ENCODE measurements at regions of chr11 and their contacts with region 1.

Region 1: GRCh38 chr11:128831174-128832120 is 35.6 kb downstream of the KCNJ1 start:
- DNase-seq: peak; percentile 66 to 88 (median 78)
- H3K4me3 ChIP-seq: peak overlapping the region in 12 of 59 donors; percentile 2 to 34 (median 26)
- H3K27ac ChIP-seq: no peak overlapping the region
- H3K27me3 ChIP-seq: peaks cover 0 to 28% (median 0%) of the 10 kb centered on the region in 45 donors
- CTCF ChIP-seq: peak; percentile 90 to 99 (median 96)

Region 2: DNA sequence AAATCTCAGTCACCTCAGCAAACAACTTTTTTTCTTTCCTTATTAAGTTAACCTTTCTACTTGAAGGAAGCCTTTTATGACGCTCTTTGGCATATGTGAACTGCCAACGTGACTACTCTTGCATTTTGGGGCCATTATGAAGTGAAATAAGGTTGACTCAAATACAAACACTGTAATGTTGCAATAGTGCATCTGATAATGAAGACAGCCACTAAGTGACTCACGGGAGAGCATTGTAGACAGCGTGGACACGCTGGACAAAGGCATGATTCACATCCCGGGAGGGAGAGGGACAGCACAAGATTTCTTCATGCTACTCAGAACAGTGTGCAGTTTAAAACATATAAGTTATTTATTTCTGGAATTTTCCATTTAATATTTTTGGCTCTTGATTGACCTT is 804.9 kb before region 1 on chr11:
- intact Hi-C with region 1: loop called in 1 of 2 experiments (anchors 2 kb)
- DNase-seq: no peak
- H3K4me3 ChIP-seq: no peak overlapping the region
- H3K27ac ChIP-seq: no peak overlapping the region
- H3K27me3 ChIP-seq: peaks cover 0 to 41% (median 0%) of the 10 kb centered on the region in 45 donors
- CTCF ChIP-seq: no peak

Region 3: DNA sequence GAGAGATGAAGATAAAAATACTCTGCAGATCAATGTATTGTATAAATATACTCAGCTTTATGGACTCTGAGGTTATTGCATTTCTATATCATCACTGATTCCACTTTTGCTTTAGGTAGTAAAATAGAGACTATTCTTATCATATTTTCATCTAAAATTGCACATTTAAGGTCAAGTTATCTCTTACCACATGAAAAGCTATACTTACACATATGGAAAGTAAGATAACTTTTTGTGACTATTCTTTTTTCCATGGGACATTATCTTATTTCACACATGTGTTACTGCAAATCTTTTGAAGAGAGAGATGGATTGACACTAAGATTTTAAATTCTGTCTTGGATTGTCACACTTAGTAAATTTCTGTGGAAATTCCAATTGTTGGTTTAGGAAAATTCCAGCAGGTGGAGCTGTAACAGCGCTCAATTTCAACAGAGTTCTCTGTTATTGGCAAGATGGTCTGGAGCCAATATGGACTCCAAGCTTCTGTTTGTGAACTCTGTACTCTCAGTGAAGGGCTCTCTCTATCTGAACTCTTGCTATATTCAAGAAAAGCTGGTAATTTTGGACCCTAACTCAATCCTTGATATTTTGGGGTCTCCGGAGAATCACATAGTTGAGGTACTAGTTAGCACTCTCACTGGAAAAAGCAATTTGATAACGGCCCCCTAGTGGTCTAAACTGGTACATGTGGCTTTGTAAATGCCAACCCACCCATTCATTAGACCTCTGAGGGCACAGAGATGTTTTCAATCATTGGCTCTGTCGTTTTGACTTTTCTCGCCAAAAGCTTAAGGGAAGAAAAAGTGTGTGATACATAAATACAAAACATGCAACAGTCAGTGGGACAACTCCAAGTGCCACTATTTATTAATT is 673.8 kb before region 1 on chr11:
- intact Hi-C with region 1: loop called in 1 of 2 experiments (anchors 5 kb)
- DNase-seq: peak in 1 of 10 donors; percentile 15
- H3K4me3 ChIP-seq: peak overlapping the region in 9 of 59 donors; percentile 4 to 31 (median 24)
- H3K27ac ChIP-seq: no peak overlapping the region
- H3K27me3 ChIP-seq: peaks cover 0 to 9% (median 0%) of the 10 kb centered on the region in 45 donors
- CTCF ChIP-seq: peak; percentile 72 to 98 (median 90)

Region 4: GRCh38 chr11:128172046-128172878 is 659.2 kb before region 1 on chr11:
- intact Hi-C with region 1: loop called (anchors 1 to 5 kb)
- DNase-seq: peak; percentile 59 to 89 (median 78)
- H3K4me3 ChIP-seq: no peak overlapping the region
- H3K27ac ChIP-seq: no peak overlapping the region
- H3K27me3 ChIP-seq: peaks cover 0 to 40% (median 2%) of the 10 kb centered on the region in 45 donors
- CTCF ChIP-seq: peak; percentile 74 to 99 (median 86)

Region 5: GRCh38 chr11:128290106-128290840 is 541.2 kb before region 1 on chr11:
- intact Hi-C with region 1: loop called (anchors 10 kb)
- DNase-seq: peak in 3 of 10 donors; percentile 36 to 52 (median 45)
- H3K4me3 ChIP-seq: peak overlapping the region in 12 of 59 donors; percentile 5 to 37 (median 28)
- H3K27ac ChIP-seq: no peak overlapping the region
- H3K27me3 ChIP-seq: peaks cover 0 to 32% (median 0%) of the 10 kb centered on the region in 45 donors
- CTCF ChIP-seq: peak; percentile 71 to 95 (median 88)